Activated naive CD4-positive, alpha-beta T cell treated with anti-CD3 and anti-CD28 coated beads, Interleukin-2, amount 10 ng/mL, durations not matched to agents 7 days and 5 days (primary cell): ENCODE measurements at regions of chr9 and their contacts with region 1.

Region 1: GRCh38 chr9:34500623-34501267 is 22.0 kb downstream of the ENHO start:
- DNase-seq: peak; percentile 80
- H3K4me3 Mint-ChIP-seq: no peak overlapping the region
- H3K27ac Mint-ChIP-seq: no peak overlapping the region
- H3K4me1 Mint-ChIP-seq: no peaks in the 10 kb centered on the region
- H3K27me3 Mint-ChIP-seq: peaks cover 21% of the 10 kb centered on the region

Region 2: GRCh38 chr9:34403554-34404380 is 97.0 kb before region 1 on chr9:
- CTCF ChIA-PET with region 1: interaction called, 41 read pairs
- DNase-seq: peak; percentile 71
- H3K4me3 Mint-ChIP-seq: no peak overlapping the region
- H3K27ac Mint-ChIP-seq: no peak overlapping the region
- H3K4me1 Mint-ChIP-seq: no peaks in the 10 kb centered on the region
- H3K27me3 Mint-ChIP-seq: no peaks in the 10 kb centered on the region

Region 3: DNA sequence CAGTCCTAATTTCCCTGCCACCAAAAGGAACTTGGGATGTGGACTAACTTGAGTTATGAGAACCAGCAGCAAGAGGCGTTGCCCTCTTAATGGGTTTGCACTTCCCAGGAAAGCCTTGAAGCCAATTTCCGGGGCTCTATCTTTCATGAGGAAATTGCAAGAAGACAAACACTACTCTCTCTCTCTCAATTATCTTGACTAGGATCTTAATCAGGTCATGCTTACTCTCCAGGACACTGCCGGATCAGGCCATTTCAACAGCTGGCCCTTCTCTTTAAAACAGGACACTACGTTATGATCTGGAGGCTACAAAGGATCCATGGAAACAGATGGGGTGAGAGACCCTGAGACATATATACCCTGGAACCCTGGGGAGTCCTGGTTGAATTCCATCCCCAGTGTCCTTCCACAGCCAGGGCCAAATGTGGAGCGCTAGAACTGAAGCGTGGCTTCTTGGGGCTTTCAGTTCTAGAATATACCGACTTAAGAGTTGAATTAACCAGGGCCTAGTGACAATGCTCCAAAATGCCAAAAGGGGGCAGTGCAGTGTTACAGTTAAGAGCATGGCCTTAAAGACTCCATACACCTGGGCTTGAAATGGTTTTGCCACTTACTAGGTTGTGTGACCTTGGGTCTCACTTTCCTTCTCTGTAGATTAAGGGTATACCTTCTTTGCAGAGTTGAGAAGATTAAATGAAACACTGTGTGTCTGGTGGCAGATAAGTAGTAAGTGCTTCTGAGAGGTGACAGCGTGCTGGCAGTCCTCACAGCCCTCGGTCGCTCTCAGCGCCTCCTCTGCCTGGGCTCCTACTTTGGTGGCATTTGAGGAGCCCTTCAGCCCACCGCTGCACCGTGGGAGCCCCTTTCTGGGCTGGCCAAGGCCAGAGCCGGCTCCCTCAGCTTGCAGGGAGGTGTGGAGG is 63.5 kb before region 1 on chr9:
- CTCF ChIA-PET with region 1: interaction called, 55 read pairs
- DNase-seq: peak; percentile 76
- H3K4me3 Mint-ChIP-seq: no peak overlapping the region
- H3K27ac Mint-ChIP-seq: no peak overlapping the region
- H3K4me1 Mint-ChIP-seq: peaks cover 6% of the 10 kb centered on the region
- H3K27me3 Mint-ChIP-seq: no peaks in the 10 kb centered on the region

Region 4: DNA sequence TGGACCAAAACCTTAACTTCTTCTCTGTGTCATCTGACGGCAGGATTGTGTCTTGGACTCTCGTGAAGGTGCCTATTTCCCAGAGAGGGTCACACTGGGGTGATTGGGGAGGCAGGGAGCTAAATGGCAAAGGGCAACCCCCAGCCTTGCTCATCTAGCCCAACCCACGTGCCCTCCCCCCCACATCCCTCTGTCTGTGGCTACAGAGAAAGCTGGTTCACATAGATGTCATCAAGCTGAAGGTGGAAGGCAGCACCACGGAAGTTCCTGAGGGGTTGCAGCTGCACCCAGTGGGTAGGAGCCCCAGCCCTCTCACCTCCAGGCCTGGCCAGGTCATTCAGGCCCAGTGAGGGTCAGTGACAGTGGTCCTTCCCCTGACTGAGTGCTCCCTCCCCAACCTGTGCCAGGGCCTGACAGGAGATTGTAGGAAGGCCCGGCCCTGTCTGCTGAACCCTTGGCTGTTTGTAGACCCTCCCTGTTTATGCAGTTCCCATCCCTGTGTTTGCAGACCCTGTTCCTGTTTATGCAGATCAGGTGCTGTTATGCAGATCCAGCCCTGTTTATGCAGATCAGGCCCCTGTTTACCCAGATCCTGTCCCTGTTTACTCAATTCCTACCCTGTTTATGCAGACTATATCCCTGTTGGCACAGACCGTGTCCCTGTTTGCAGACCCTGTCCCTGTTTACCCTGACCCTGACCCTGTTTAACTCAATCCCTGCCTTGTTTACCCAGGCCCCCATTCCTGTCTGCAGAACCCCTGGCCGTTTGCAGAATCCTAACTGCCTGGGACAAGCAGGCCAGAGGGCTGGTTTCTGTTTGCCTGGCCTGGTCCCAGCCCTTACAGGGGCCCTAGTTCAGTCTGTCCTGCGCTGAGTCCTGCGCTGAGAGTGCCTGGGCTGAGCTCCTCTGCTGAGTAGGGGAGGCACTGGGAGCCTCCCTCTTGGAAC is 11.7 kb after region 1 on chr9:
- CTCF ChIA-PET with region 1: interaction called, 10 read pairs
- DNase-seq: no peak
- H3K4me3 Mint-ChIP-seq: no peak overlapping the region
- H3K27ac Mint-ChIP-seq: no peak overlapping the region
- H3K4me1 Mint-ChIP-seq: no peaks in the 10 kb centered on the region
- H3K27me3 Mint-ChIP-seq: peaks cover 17% of the 10 kb centered on the region

Region 5: GRCh38 chr9:34710023-34710422 is 209.3 kb after region 1 on chr9 and contains the start of gene CCL21:
- CTCF ChIA-PET with region 1: no interaction called
- DNase-seq: no peak
- H3K4me3 Mint-ChIP-seq: no peak within 1 kb of the TSS
- H3K27ac Mint-ChIP-seq: no peak within 1 kb of the TSS
- H3K4me1 Mint-ChIP-seq: no peaks in the 10 kb centered on the region
- H3K27me3 Mint-ChIP-seq: peaks cover 21% of the 10 kb centered on the region